ENCODE measurements at regions of chr11 and their contacts with region 1.

Region 1: DNA sequence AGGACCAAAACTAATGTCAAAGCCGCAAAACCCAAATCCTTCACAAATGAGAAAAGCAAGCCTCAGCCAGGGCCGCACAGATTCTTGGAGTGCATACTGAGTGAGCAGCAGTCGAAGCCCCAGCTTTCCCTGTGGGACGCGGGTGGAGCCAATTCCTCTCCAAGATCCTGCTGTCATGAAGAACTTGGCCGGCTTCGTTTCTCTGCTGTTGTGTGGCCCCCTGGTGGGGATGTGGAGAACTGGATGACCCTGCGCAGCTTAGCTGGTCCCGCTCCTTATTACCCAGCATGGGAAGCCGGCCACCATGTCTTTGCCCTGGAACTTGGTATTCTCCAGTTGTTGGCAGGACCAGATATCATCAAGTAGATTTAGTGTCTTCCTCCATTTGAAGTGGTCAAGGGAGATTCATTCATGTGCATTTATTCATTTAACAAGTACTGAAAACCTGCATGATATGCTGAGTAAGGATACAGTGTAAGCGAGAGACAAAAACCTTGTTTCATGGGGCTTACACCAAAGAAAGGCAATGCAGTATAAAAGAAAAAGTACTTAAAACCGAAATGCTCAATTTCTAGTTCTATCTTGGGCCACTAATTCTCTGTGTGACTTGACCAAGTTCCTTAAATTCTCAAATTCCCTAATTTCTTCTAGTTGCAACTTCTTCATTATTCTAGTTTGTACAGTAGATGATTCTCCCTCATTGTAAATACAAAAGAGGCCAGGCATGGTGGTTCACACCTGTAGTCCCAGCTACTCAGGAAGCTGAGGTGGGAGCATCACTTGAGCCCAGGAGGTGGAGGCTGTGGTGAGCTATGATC is 56.7 kb upstream of the CRTAM start:
- DNase-seq: peak; percentile 95
- H3K4me3 ChIP-seq: no peak overlapping the region
- H3K27ac ChIP-seq: no peak overlapping the region
- H3K4me1 ChIP-seq: peaks cover 22% of the 10 kb centered on the region
- H3K27me3 ChIP-seq: no peaks in the 10 kb centered on the region
- CTCF ChIP-seq: peak; percentile 99

Region 2: GRCh38 chr11:122578168-122578825 is 203.3 kb before region 1 on chr11:
- CTCF ChIA-PET with region 1: interaction called, 5 read pairs
- POLR2A ChIA-PET with region 1: no interaction called
- intact Hi-C with region 1: loop called (anchors 2 kb)
- DNase-seq: peak; percentile 58
- H3K4me3 ChIP-seq: no peak overlapping the region
- H3K27ac ChIP-seq: no peak overlapping the region
- H3K4me1 ChIP-seq: no peaks in the 10 kb centered on the region
- H3K27me3 ChIP-seq: no peaks in the 10 kb centered on the region
- CTCF ChIP-seq: peak; percentile 63

Region 3: DNA sequence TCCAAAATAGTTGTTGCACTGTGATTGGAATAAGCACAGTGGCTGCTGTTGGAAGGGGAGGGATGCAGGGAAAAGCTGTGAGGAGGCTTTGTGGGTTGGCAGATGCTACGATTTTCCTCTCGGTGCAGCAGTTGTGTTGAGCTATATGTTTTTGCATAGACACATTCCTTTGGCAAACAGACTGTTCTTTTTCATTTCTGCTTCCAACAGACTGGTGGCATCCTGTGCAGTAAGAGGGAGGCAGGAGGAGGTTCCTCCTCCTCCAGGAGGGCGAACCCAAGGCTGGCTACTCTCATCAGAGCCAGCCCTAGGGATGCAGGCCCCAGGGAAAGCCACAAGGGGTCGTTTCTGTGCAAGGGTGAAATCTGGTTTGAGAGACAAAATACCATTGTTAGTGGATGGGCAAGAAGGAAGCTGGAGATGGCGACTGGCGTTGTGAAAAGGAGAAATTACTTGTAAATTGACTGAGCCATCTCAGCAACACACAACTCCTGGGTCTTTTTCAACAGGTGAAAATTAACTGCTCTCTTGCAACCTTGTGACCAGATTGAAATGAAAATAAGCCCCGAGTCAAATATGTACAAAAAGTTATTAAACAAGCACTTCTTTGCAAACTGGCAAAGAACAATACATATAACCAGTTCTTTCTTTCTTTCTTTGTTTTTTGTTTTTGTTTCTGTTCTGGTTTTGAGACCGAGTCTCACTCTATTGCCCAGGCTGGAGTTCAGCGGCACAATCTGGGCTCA is 152.6 kb before region 1 on chr11:
- CTCF ChIA-PET with region 1: interaction called, 42 read pairs
- POLR2A ChIA-PET with region 1: no interaction called
- intact Hi-C with region 1: loop called (anchors 1 kb)
- DNase-seq: peak; percentile 89
- H3K4me3 ChIP-seq: no peak overlapping the region
- H3K27ac ChIP-seq: no peak overlapping the region
- H3K4me1 ChIP-seq: no peaks in the 10 kb centered on the region
- H3K27me3 ChIP-seq: no peaks in the 10 kb centered on the region
- CTCF ChIP-seq: peak; percentile 93

Region 4: DNA sequence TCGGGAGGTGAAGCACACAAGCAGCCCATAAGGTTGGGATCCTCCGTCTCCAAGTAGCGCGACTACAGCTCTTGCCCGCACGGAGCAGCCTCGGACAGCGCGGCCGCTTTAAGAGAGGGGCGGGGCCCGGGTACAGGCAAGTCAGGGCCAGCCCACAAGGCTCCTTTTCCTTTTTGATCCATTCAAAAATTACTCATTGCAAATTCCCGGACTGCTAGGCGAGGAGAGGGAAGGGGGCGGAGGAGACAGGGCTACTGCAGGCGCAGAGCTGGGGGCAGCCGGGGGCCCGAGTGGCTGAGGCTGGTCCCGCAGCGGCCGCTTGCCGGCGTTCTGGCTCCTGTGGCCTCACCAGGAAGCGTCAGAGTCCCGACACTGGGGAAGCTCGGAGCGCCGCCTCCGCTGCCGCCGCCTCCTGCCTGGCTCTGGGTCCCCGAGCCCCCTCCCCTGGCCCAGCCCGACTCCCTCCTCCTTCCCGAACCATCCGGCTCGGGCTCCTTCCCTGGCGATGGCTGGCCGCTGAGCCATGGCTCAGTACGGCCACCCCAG is 126.0 kb before region 1 on chr11 and contains the start of gene UBASH3B:
- CTCF ChIA-PET with region 1: interaction called, 10 read pairs
- POLR2A ChIA-PET with region 1: no interaction called
- intact Hi-C with region 1: no loop called
- DNase-seq: peak; percentile 91
- H3K4me3 ChIP-seq: peak within 1 kb of the TSS; percentile 95
- H3K27ac ChIP-seq: peak within 1 kb of the TSS; percentile 75
- H3K4me1 ChIP-seq: peaks cover 13% of the 10 kb centered on the region
- H3K27me3 ChIP-seq: no peaks in the 10 kb centered on the region
- CTCF ChIP-seq: 0 out of 2 replicates have a peak, but pooled peaks have one; percentile 19
- total RNA-seq, gene UBASH3B: 15.0 and 15.3 TPM in 2 replicates

Region 5: DNA sequence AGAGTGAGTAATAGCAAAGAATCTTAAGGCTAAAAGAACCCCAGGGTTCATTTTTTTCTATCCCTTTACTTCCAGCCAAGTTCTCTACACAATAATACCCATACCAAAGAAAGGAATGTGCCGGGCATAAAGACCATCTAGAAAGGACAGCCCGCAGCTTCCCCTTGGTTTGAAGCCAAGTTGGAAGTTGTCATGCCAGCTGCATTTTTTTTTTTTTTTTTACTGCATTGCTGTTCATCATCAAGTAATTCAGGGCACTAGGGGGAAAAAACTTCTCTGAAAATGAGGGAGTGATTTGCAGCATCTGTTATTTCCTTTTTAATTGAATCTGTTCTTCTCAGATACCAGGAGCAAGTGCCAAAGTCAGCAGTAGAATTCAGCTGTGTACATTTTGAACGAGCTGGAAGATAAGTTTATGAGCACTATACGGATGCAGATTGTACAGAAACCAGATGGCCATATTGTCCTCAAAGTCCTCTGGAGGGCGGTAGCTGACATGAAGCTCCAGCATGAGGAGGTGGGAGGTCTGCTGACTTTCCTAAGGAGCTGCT is 69.7 kb before region 1 on chr11:
- CTCF ChIA-PET with region 1: interaction called, 19 read pairs
- POLR2A ChIA-PET with region 1: no interaction called
- intact Hi-C with region 1: no loop called
- DNase-seq: peak; percentile 88
- H3K4me3 ChIP-seq: no peak overlapping the region
- H3K27ac ChIP-seq: peak overlapping the region; percentile 43
- H3K4me1 ChIP-seq: peaks cover 36% of the 10 kb centered on the region
- H3K27me3 ChIP-seq: no peaks in the 10 kb centered on the region
- CTCF ChIP-seq: peak; percentile 67

Region 6: GRCh38 chr11:122853971-122854446 is 72.4 kb after region 1 on chr11:
- CTCF ChIA-PET with region 1: interaction called, 12 read pairs
- POLR2A ChIA-PET with region 1: no interaction called
- intact Hi-C with region 1: no loop called
- DNase-seq: peak; percentile 91
- H3K4me3 ChIP-seq: no peak overlapping the region
- H3K27ac ChIP-seq: no peak overlapping the region
- H3K4me1 ChIP-seq: peaks cover 40% of the 10 kb centered on the region
- H3K27me3 ChIP-seq: no peaks in the 10 kb centered on the region
- CTCF ChIP-seq: peak; percentile 88

Region 7: GRCh38 chr11:123316003-123316402 is 534.4 kb after region 1 on chr11:
- CTCF ChIA-PET with region 1: no interaction called
- POLR2A ChIA-PET with region 1: no interaction called
- intact Hi-C with region 1: no loop called
- DNase-seq: no peak
- H3K4me3 ChIP-seq: no peak overlapping the region
- H3K27ac ChIP-seq: no peak overlapping the region
- H3K4me1 ChIP-seq: no peaks in the 10 kb centered on the region
- H3K27me3 ChIP-seq: no peaks in the 10 kb centered on the region
- CTCF ChIP-seq: no peak

Measured in A673 (cell line).